ENCODE measurements at regions of chr12 and their contacts with region 1.

Region 1: GRCh38 chr12:95918194-95918993 is 24.0 kb downstream of the CCDC38 start:
- DNase-seq: peak; percentile 48
- H3K27ac ChIP-seq: no peak overlapping the region
- CTCF ChIP-seq: peak; percentile 87

Region 2: GRCh38 chr12:95998611-95999286 is 80.4 kb after region 1 on chr12:
- CTCF ChIA-PET with region 1: interaction called, 12 read pairs
- POLR2A ChIA-PET with region 1: no interaction called
- DNase-seq: peak; percentile 49
- H3K27ac ChIP-seq: no peak overlapping the region
- CTCF ChIP-seq: peak; percentile 38

Measured in RWPE1 (cell line).